ENCODE measurements at regions of chr12 and their contacts with region 1.

Region 1: DNA sequence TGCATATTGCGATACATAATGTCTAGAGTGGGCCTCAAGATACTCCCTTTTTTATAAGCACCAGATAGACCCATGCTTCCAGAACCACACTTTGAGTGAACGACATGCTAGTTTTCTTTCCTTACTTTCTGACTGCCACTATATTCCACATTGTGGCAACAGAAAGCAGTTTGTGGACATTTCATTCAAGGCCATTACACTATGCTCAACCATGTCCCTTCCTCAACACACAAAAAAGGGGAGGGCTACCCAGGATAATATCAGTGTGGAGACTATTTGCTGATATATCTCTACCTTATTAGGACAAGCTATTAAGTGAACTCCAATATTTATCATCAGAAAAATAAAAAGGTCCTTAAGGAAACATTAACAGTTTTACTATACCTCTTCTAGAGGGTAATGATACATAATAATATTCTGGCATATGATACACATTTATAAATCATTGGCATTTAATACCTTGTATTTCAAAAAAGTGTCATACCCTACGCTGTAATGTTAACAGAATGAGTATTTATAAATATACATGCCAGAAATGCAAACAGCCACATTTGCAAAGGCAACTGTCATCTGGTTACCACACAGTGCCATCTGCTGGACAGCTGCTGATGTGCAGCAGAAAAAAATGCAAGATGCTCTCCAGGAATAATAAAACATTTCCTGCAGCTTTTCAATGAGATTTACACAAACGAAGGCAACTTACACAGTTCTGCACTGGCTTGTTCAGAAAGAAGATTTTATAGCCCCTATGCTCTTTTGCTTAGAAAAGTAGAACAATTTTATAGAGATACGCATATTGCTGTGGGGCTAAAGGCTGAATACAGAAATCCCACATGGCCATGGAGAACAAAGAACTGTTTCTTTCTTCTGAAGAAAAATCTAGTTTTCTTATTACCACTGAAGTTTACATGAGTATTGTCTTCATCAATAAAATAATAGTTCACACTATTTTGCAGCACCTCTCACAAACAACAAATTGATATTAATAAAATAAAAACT is 182.2 kb upstream of the GRIP1 start:
- DNase-seq: peak; percentile 81
- ATAC-seq: peak; percentile 35; the same call in 1 of the 2 replicates
- H3K4me3 ChIP-seq: no peak overlapping the region
- H3K27ac ChIP-seq: no peak overlapping the region
- H3K4me1 ChIP-seq: peaks cover 9% of the 10 kb centered on the region
- H3K27me3 ChIP-seq: no peaks in the 10 kb centered on the region
- CTCF ChIP-seq: peak; percentile 97

Region 2: DNA sequence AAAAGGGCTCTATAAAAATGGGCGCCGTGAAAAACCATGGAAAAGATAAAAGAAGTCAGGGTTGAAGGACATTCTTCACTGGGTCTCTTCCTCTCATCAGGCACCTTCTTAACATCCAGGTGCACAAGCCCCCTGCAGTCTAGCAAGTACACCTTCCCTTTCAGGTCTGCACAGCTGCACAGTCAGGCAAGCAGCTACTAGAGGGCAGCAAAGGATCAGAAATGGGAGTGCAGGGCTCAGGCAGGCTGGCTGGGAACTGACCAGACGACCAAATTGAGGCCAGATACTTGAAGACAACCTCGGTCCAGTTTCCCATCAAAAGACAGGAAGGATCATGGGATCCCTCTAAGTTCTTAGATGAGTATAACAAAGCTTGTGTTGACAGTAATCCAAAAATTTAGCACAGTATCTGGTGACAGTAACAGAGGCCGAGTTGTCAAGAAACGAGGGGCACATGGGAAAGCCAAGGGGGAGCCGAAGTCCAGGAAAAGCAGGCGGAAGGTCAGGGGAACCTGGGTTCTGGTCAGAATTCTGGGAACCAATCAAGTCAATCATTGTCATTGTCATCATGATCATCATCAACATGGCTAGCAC is 172.1 kb before region 1 on chr12:
- CTCF ChIA-PET with region 1: no interaction called
- POLR2A ChIA-PET with region 1: no interaction called
- intact Hi-C with region 1: loop called (anchors 2 kb)
- DNase-seq: peak; percentile 82
- ATAC-seq: peak; percentile 99
- H3K4me3 ChIP-seq: no peak overlapping the region
- H3K27ac ChIP-seq: no peak overlapping the region
- H3K4me1 ChIP-seq: no peaks in the 10 kb centered on the region
- H3K27me3 ChIP-seq: no peaks in the 10 kb centered on the region
- CTCF ChIP-seq: peak; percentile 92

Region 3: DNA sequence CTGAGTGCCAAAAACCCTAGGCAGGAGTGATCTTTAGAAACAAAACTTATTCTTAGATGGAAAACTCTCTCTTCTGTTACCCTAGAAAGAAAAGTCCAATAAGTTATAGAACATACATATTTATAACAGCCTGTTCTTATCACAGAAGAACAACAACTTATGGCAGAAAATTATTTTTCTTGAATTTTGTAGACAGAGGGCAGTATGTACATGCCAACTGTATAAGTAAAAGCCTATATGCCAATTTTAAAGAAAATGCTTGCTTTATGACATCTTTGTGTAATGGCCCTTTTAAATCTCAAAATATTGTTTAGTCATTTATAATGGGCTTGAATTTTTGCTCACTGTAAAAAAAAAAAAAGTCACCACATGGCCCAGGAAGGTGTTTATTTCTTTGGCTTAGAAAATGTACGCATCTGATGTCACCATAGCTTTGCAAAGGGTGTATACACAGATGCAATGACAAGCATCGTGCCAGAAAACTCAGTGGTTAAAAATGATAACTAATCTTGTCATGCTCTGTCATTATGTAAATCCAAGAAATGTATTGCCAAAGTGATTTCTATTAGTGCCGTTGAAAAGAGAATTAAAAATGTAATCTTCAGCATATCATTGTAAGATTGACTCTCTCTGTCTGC is 143.9 kb before region 1 on chr12:
- CTCF ChIA-PET with region 1: no interaction called
- POLR2A ChIA-PET with region 1: no interaction called
- intact Hi-C with region 1: loop called (anchors 1 kb)
- DNase-seq: peak; percentile 38
- ATAC-seq: no peak
- H3K4me3 ChIP-seq: no peak overlapping the region
- H3K27ac ChIP-seq: no peak overlapping the region
- H3K4me1 ChIP-seq: no peaks in the 10 kb centered on the region
- H3K27me3 ChIP-seq: no peaks in the 10 kb centered on the region
- CTCF ChIP-seq: peak; percentile 61